SK-N-SH (cell line): ENCODE measurements at regions of chr2 and their contacts with region 1.

Region 1: DNA sequence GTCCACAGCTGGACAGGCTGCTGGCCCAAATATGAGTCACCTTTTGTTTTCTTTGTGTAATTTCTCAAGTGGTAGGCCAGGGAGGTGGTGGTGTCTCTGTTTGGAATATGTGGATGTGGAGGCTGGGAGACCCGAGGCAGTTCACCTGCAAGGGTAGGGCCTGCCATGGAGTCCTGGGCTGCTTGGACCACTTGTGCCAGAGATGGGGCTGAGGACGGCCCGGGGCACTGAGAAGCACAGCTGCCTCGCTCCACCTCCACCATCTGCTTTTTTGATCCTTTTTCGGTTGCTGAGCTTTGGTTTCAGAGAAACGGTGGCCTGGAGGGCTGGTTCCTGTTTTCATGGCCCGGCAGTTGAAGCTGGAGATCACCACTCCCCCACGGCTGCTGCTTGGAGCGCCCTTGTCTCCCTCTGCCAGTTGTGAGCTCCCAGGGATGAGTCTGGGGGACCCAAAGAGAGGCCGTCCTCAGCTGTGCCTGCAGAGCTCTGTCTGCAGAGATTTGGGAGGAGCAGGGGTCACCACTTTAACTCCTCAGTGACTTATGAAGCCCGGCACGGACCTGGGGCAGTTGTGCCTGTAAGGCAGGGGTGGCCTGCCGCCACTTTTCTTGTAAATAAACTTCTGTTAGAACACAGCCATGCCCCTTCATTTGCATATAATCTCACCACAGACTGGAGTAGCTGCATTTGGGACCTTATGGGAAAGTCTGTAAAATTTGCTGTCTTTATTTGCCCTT is 67.6 kb upstream of the MCFD2 start:
- DNase-seq: peak; percentile 63
- H3K4me3 ChIP-seq: no peak overlapping the region
- H3K27ac ChIP-seq: peak overlapping the region; percentile 11 to 71
- H3K4me1 ChIP-seq: peaks cover 28 to 50% of the 10 kb centered on the region in 2 experiments
- H3K27me3 ChIP-seq: no peaks in the 10 kb centered on the region
- CTCF ChIP-seq: no peak
- EP300 ChIP-seq: no peak
- RAD21 ChIP-seq: no peak

Region 2: GRCh38 chr2:46915811-46916630 is 67.2 kb before region 1 on chr2:
- CTCF ChIA-PET with region 1: interaction called, 15 read pairs
- POLR2A ChIA-PET with region 1: no interaction called
- DNase-seq: peak; percentile 100
- H3K4me3 ChIP-seq: peak overlapping the region; percentile 77 to 81
- H3K27ac ChIP-seq: peak overlapping the region; percentile 90 to 93
- H3K4me1 ChIP-seq: peaks cover 15 to 21% of the 10 kb centered on the region in 2 experiments; a peak in 3 of 4 replicates
- H3K27me3 ChIP-seq: no peaks in the 10 kb centered on the region
- CTCF ChIP-seq: no peak
- EP300 ChIP-seq: no peak
- RAD21 ChIP-seq: no peak

Region 3: GRCh38 chr2:46971929-46972328 is 11.3 kb before region 1 on chr2:
- CTCF ChIA-PET with region 1: interaction called, 13 read pairs
- POLR2A ChIA-PET with region 1: no interaction called
- DNase-seq: no peak
- H3K4me3 ChIP-seq: no peak overlapping the region
- H3K27ac ChIP-seq: peak overlapping the region in 1 of 2 experiments; percentile 28; a peak in 1 of 4 replicates
- H3K4me1 ChIP-seq: peaks cover 10 to 28% of the 10 kb centered on the region in 2 experiments; a peak in 3 of 4 replicates
- H3K27me3 ChIP-seq: no peaks in the 10 kb centered on the region
- CTCF ChIP-seq: no peak
- EP300 ChIP-seq: no peak
- RAD21 ChIP-seq: no peak